Activated CD4-positive, alpha-beta memory T cell treated with anti-CD3 and anti-CD28 coated beads for 36 hours (primary cell): ENCODE measurements at regions of chr12 and their contacts with region 1.

Region 1: GRCh38 chr12:14185427-14186192 is 179.9 kb upstream of the ATF7IP start:
- DNase-seq: peak; percentile 24
- H3K4me3 Mint-ChIP-seq: no peak overlapping the region
- H3K27ac Mint-ChIP-seq: no peak overlapping the region
- H3K4me1 Mint-ChIP-seq: no peaks in the 10 kb centered on the region
- H3K27me3 Mint-ChIP-seq: peaks cover 6% of the 10 kb centered on the region

Region 2: GRCh38 chr12:14322403-14322802 is 136.8 kb after region 1 on chr12:
- CTCF ChIA-PET with region 1: no interaction called
- POLR2A ChIA-PET with region 1: no interaction called
- intact Hi-C with region 1: no loop called
- DNase-seq: no peak
- H3K4me3 Mint-ChIP-seq: no peak overlapping the region
- H3K27ac Mint-ChIP-seq: no peak overlapping the region
- H3K4me1 Mint-ChIP-seq: no peaks in the 10 kb centered on the region
- H3K27me3 Mint-ChIP-seq: no peaks in the 10 kb centered on the region

Region 3: DNA sequence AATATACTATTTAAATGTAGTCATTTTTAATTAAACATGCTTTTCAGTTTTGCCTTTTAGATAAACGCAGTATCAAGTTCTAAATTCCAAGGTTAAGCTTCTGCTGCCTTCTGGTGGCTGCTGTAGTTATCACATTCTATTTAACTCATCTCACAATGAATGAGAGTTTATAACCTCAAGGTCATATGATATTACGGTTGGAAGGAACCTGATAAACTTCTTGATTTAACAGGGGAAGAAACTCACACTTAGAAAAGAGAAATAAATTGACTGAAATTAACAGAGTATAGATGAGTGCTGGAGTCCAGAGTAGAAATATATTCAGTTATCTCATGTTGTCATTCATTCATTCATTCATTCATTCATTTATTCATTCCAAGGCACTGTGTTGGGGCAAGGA is 478.9 kb after region 1 on chr12:
- CTCF ChIA-PET with region 1: interaction called, 9 read pairs
- POLR2A ChIA-PET with region 1: no interaction called
- intact Hi-C with region 1: loop called (anchors 1 kb)
- DNase-seq: peak; percentile 15
- H3K4me3 Mint-ChIP-seq: no peak overlapping the region
- H3K27ac Mint-ChIP-seq: no peak overlapping the region
- H3K4me1 Mint-ChIP-seq: peaks cover 7% of the 10 kb centered on the region
- H3K27me3 Mint-ChIP-seq: no peaks in the 10 kb centered on the region